ENCODE measurements at regions of chr4 and their contacts with region 1.

Region 1: GRCh38 chr4:153728660-153729059 is 31.2 kb downstream of the RNF175 start:
- DNase-seq: no peak
- ATAC-seq: peak; percentile 86
- H3K4me3 Mint-ChIP-seq: peak overlapping the region; percentile 19
- H3K27ac Mint-ChIP-seq: peak overlapping the region; percentile 50
- H3K4me1 Mint-ChIP-seq: peaks cover 52% of the 10 kb centered on the region
- H3K27me3 Mint-ChIP-seq: no peaks in the 10 kb centered on the region
- CTCF ChIP-seq: no peak

Region 2: GRCh38 chr4:153684182-153684970 is 44.3 kb before region 1 on chr4 and contains the start of gene TLR2:
- CTCF ChIA-PET with region 1: no interaction called
- POLR2A ChIA-PET with region 1: no interaction called
- intact Hi-C with region 1: loop called (anchors 1 kb)
- DNase-seq: peak; percentile 66
- ATAC-seq: peak; percentile 90
- H3K4me3 Mint-ChIP-seq: peak within 1 kb of the TSS; percentile 82
- H3K27ac Mint-ChIP-seq: peak within 1 kb of the TSS; percentile 9
- H3K4me1 Mint-ChIP-seq: peaks cover 12% of the 10 kb centered on the region
- H3K27me3 Mint-ChIP-seq: peaks cover 5% of the 10 kb centered on the region
- CTCF ChIP-seq: no peak
- total RNA-seq, gene TLR2: 3.6 and 4.3 TPM in 2 replicates

Region 3: DNA sequence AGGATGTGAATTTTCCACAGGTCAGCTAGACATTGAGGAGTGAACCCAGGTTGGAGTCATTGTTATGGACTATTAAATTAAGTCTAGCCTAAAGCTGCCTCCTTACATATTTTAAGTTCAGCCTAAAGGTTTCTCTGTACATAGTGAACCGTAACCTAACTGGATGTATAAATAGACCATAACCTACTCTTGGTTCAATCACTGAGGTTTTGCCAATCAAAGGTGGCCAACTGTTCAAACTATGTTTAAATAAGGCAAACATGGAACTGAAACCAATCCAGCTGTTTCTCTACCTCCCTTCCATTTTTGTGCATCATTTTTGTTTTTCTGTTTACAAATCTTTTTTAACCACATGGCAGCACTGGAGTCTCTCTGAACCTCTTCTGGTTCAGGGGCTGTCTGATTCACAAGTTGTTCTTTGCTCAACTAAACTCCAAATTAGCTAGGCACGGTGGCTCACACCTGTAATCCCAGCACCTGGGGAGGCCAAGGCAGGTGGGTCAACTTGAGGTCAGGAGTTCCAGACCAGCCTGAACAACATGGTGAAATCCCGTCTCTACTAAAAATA is 104.1 kb after region 1 on chr4:
- CTCF ChIA-PET with region 1: no interaction called
- POLR2A ChIA-PET with region 1: no interaction called
- intact Hi-C with region 1: no loop called
- DNase-seq: no peak
- ATAC-seq: no peak
- H3K4me3 Mint-ChIP-seq: no peak overlapping the region
- H3K27ac Mint-ChIP-seq: no peak overlapping the region
- H3K4me1 Mint-ChIP-seq: no peaks in the 10 kb centered on the region
- H3K27me3 Mint-ChIP-seq: peaks cover 9% of the 10 kb centered on the region
- CTCF ChIP-seq: no peak

Measured in activated B cell treated with CpG ODN at 0.5 μM for 24 hours (primary cell).